Activated T-helper 1 cell treated with anti-CD3 and anti-CD28 coated beads, Interleukin-12 subunit alpha, Interleukin-12 subunit beta, Interleukin-2, Interleukin-4 antibody, amounts not matched to agents 30 ng/mL and 10 ng/mL and 1 ng/mL, durations not matched to agents 14 hours and 24 hours and 36 hours (primary cell): ENCODE measurements at regions of chr19 and their contacts with region 1.

Region 1: GRCh38 chr19:15466851-15467733 is 2.7 kb upstream of the RASAL3 start:
- DNase-seq: peak; percentile 68
- H3K4me3 Mint-ChIP-seq: peak overlapping the region; percentile 65
- H3K27ac Mint-ChIP-seq: peak overlapping the region; percentile 97
- H3K4me1 Mint-ChIP-seq: peaks cover 68% of the 10 kb centered on the region
- H3K27me3 Mint-ChIP-seq: peaks cover 3% of the 10 kb centered on the region

Region 2: DNA sequence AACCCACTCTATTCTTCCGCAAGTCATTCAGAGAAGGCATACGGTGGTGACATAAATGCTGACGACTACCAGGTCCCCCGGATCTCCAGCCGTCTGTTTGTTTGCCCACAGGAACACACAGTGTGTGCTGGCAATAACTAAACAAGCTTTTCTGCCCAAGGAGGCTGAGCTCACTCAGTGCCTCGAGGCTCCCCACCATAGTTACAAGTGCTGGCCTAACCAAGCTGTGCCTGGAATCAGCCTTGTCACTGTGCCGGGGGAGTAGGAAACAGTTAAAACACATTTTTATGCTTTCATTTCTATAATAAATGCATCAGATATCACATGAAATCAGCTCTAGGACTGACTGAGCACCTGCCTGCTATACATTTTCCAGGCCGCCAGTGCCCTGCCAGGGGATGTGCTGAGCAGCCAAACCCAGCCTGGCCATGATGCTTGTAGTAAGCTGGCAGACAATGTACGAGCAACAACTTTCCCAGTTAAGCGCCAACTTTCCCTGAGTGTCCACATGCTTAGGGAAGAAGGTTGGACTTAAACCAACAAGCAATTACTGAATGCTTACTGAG is 162.9 kb before region 1 on chr19:
- intact Hi-C with region 1: loop called (anchors 5 kb)
- DNase-seq: no peak
- H3K4me3 Mint-ChIP-seq: no peak overlapping the region
- H3K27ac Mint-ChIP-seq: peak overlapping the region; percentile 80
- H3K4me1 Mint-ChIP-seq: peaks cover 64% of the 10 kb centered on the region
- H3K27me3 Mint-ChIP-seq: no peaks in the 10 kb centered on the region

Region 3: DNA sequence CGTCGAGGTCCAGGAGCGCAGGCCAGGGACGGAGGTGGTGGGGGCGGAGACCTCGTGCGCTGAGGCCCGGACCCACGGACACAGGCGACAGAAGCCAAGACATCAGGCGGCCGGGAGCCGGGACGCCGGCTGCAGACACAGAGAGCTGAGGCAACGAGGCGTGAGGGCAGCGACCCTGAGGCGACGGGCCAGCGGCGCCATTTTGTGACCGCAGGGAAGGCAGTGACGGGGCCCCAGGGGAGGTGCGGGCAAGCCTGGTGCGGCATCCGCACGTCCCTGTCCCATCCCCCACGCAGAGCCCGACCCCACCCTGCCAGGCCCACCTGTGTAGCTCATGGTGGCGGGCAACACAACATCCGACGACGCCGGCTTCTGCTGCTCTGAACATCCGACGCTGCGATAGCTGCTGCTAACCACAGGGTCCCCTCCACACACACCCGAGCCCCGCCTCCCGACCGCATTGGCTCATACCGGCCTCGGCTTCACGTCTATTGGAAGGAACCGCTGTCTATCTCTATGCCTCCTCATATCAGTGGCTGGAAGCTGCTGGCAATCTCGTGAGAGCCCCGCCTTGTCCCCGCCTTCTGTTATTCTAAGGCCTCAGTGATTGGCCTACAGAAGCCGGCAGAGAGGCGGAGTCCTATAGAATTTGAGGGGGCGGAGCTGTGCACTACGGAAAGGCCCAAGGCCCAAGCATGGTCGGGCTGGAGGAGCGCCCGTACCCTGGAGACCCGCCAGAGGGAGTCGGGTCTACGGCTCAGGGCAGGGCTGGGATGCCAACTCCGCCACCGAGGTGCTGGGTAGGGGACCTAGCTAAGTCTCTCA is 48.3 kb before region 1 on chr19 and contains the start of gene AKAP8L:
- intact Hi-C with region 1: loop called (anchors 1 kb)
- DNase-seq: peak; percentile 98
- H3K4me3 Mint-ChIP-seq: peak within 1 kb of the TSS; percentile 98
- H3K27ac Mint-ChIP-seq: peak within 1 kb of the TSS; percentile 89
- H3K4me1 Mint-ChIP-seq: peaks cover 18% of the 10 kb centered on the region
- H3K27me3 Mint-ChIP-seq: no peaks in the 10 kb centered on the region
- total RNA-seq, gene AKAP8L: 73.8 and 77.9 TPM in 2 replicates

Region 4: GRCh38 chr19:15449620-15450527 is 17.2 kb before region 1 on chr19 and contains the start of gene WIZ:
- intact Hi-C with region 1: loop called (anchors 1 kb)
- DNase-seq: peak; percentile 74
- H3K4me3 Mint-ChIP-seq: peak within 1 kb of the TSS; percentile 86
- H3K27ac Mint-ChIP-seq: peak within 1 kb of the TSS; percentile 98
- H3K4me1 Mint-ChIP-seq: peaks cover 32% of the 10 kb centered on the region
- H3K27me3 Mint-ChIP-seq: peaks cover 3% of the 10 kb centered on the region
- total RNA-seq, gene WIZ: 37.6 and 38.7 TPM in 2 replicates

Region 5: DNA sequence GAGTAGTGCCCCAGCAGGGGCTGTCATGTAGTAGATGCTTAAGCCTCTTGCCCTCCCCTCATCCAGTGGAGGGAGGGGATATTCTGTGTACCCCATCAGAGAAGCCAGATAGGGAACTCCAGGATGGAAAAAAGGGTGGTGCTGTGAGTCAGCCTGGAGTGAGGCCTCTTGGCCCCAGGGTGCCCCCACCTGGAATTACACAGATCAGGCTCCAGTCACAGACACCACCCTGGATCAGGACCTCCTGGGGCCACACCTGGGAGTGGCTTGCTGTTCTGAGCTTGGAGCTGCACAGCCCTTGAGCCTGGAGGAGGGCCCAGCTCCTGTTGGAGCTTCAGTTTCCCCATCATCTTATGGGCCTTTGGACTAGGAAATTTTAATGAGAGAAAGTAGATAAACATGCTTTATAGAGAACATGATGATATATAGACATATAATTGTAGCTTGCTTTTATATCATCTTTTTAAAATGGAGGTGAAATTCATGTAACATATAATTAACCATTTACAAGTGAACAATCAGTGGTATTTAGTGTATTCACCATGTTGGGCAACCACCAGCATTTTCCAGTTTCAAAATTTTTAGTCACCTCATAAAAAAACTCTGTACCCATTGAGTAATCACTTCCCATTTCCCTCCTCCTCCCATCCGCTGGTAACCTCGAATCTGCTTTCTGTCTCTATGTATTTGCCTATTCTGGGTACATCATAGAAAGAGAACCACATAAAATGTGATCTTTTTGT is 65.9 kb after region 1 on chr19:
- intact Hi-C with region 1: loop called (anchors 1 kb)
- DNase-seq: no peak
- H3K4me3 Mint-ChIP-seq: no peak overlapping the region
- H3K27ac Mint-ChIP-seq: peak overlapping the region; percentile 8
- H3K4me1 Mint-ChIP-seq: peaks cover 29% of the 10 kb centered on the region
- H3K27me3 Mint-ChIP-seq: peaks cover 7% of the 10 kb centered on the region

Region 6: DNA sequence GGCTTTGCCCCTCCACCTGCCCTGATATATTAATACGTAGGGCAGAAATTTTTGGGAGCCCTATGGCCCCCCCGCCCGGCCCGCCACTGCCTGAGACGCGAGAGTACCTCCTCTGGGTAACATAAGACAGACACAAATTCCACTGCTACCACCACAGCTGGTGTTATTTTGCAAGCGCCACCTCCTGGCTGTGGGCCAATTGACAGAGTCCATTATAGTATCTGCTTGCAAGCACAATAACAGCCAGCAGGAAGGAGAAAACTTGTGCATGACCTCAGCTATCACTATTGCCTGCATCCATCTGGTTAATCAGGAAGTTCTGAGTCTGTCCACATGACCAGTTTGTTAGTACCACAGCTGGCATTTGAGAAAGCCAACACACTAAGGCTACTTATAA is 235.4 kb after region 1 on chr19:
- intact Hi-C with region 1: no loop called
- DNase-seq: no peak
- H3K4me3 Mint-ChIP-seq: no peak overlapping the region
- H3K27ac Mint-ChIP-seq: no peak overlapping the region
- H3K4me1 Mint-ChIP-seq: no peaks in the 10 kb centered on the region
- H3K27me3 Mint-ChIP-seq: peaks cover 7% of the 10 kb centered on the region

Region 7: GRCh38 chr19:15836595-15837337 is 369.7 kb after region 1 on chr19:
- intact Hi-C with region 1: loop called (anchors 10 kb)
- DNase-seq: peak; percentile 94
- H3K4me3 Mint-ChIP-seq: peak overlapping the region; percentile 92
- H3K27ac Mint-ChIP-seq: peak overlapping the region; percentile 99
- H3K4me1 Mint-ChIP-seq: peaks cover 16% of the 10 kb centered on the region
- H3K27me3 Mint-ChIP-seq: no peaks in the 10 kb centered on the region

Region 8: DNA sequence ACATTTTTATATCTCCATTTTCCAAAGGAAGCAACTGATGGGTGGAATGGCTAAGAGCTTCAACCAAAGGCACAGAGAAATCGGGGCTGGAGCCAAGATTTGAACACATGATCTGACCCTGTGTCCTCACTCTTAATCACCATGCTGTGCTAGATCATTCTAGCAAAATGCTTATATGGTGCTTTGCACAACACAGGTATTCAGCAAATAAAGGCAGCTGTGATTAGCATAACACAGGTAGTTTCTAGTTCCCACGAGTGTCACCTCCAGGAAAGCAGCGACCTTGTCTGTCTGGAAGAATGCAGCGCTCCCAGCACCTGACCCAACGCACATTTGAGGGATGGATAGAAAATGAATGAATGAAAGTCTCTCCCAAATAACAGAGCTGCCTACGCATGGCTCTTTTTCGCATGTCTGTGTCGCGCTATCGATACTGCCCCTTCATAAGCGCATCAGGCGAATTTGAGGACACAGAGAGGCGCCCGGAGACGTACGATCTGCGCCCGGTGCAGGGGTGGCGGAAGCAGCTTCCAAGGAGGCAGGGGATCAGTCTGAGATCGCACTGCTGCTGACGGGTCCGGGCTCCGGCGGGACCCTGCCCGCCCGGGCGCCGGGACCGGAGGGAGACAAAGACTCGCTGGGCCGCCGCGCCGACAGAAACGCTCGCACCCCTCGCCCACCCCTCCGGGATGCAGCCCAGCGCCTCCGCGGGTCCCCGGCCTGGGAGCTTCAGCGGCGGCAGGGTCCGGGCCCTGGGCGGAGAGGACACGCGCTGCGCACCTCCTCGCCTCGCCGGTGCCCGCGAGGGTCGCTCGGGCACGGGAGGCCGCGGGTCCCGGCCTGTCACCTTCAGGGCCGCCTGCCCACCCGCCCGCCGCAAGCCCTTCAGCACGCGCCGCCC is 1004.1 kb after region 1 on chr19:
- intact Hi-C with region 1: loop called (anchors 10 kb)
- DNase-seq: peak; percentile 22
- H3K4me3 Mint-ChIP-seq: peak overlapping the region; percentile 90
- H3K27ac Mint-ChIP-seq: peak overlapping the region; percentile 72
- H3K4me1 Mint-ChIP-seq: peaks cover 28% of the 10 kb centered on the region
- H3K27me3 Mint-ChIP-seq: no peaks in the 10 kb centered on the region